WTC11 (cell line): ENCODE measurements at regions of chr5 and their contacts with region 1.

Region 1: GRCh38 chr5:91928754-91929521 is 545.8 kb upstream of the ARRDC3 start:
- DNase-seq: no peak
- ATAC-seq: peak; percentile 73
- H3K4me3 Mint-ChIP-seq: no peak overlapping the region
- H3K27ac Mint-ChIP-seq: no peak overlapping the region
- H3K4me1 Mint-ChIP-seq: peaks cover 15% of the 10 kb centered on the region
- H3K27me3 Mint-ChIP-seq: no peaks in the 10 kb centered on the region
- CTCF ChIP-seq: no peak; the same call in 1 of the 2 replicates

Region 2: GRCh38 chr5:91641730-91642350 is 287.1 kb before region 1 on chr5:
- CTCF ChIA-PET with region 1: interaction called, 18 read pairs
- POLR2A ChIA-PET with region 1: no interaction called
- DNase-seq: no peak
- ATAC-seq: no peak
- H3K4me3 Mint-ChIP-seq: no peak overlapping the region
- H3K27ac Mint-ChIP-seq: no peak overlapping the region
- H3K4me1 Mint-ChIP-seq: peaks cover 27% of the 10 kb centered on the region
- H3K27me3 Mint-ChIP-seq: no peaks in the 10 kb centered on the region
- CTCF ChIP-seq: peak; percentile 55

Region 3: DNA sequence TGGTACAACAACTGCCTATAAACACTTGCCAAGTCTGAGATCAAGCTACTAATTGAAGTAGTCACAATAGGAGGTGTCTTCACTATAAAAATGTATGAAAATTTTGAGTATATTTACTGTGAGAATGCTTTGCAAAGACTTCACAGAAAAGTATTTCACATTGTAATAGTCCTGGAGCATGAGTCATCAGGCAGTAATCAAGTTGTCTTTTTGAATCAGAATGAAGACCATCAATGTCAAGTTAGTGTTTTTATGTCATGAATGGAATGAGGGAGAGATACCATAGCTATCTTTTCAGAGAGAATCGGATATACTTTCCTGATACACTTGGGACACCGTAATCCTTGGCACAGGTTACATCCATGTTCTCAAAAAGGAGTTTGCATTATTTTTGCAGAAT is 78.9 kb before region 1 on chr5:
- CTCF ChIA-PET with region 1: no interaction called
- POLR2A ChIA-PET with region 1: no interaction called
- DNase-seq: no peak
- ATAC-seq: no peak
- H3K4me3 Mint-ChIP-seq: no peak overlapping the region
- H3K27ac Mint-ChIP-seq: peak overlapping the region; percentile 67; the same call in 1 of the 2 replicates
- H3K4me1 Mint-ChIP-seq: peaks cover 28% of the 10 kb centered on the region
- H3K27me3 Mint-ChIP-seq: no peaks in the 10 kb centered on the region
- CTCF ChIP-seq: no peak

Region 4: DNA sequence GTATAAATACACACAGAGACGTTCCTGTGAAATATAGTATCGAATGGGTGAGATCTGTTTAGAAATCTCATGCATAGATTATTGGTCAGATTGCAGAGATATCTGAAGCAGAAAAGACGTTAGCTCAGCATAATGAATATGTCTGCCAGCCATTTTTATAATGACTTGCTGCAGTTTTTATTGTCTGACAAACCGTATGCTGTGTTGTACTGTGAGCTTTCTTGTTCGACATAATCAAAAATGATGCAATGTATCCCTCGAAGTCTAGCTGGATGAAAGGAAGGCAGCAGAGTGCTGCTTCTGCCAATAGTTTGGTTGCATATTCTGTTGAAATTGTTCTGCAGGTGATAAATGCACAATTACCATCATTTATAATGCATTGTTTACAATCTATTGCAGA is 30.9 kb before region 1 on chr5:
- CTCF ChIA-PET with region 1: no interaction called
- POLR2A ChIA-PET with region 1: no interaction called
- DNase-seq: no peak
- ATAC-seq: no peak
- H3K4me3 Mint-ChIP-seq: no peak overlapping the region
- H3K27ac Mint-ChIP-seq: no peak overlapping the region
- H3K4me1 Mint-ChIP-seq: peaks cover 6% of the 10 kb centered on the region
- H3K27me3 Mint-ChIP-seq: no peaks in the 10 kb centered on the region
- CTCF ChIP-seq: no peak

Region 5: GRCh38 chr5:91957666-91958065 is 28.7 kb after region 1 on chr5:
- CTCF ChIA-PET with region 1: no interaction called
- POLR2A ChIA-PET with region 1: no interaction called
- DNase-seq: no peak
- ATAC-seq: no peak
- H3K4me3 Mint-ChIP-seq: no peak overlapping the region
- H3K27ac Mint-ChIP-seq: no peak overlapping the region
- H3K4me1 Mint-ChIP-seq: peaks cover 7% of the 10 kb centered on the region
- H3K27me3 Mint-ChIP-seq: no peaks in the 10 kb centered on the region
- CTCF ChIP-seq: no peak

Region 6: DNA sequence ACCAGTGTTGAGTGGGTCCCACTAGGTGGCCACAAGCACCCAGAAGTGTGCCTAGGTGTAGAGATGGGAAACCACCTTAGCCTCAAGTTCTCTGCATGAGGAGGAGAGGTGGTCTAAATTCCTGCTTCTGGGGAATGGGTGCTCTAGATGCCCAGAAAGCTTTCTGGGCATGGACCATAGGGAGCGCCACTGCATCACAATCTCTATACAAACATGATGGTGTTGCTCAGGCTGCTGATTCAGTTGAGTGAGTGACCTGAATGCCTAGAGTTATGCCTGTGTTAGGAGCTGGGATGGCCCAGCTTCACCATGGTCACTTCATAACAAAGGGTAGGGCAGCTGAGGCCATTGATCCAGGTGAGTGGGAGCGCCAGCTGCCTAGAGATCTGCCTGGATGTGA is 122.0 kb after region 1 on chr5:
- CTCF ChIA-PET with region 1: no interaction called
- POLR2A ChIA-PET with region 1: no interaction called
- DNase-seq: no peak
- ATAC-seq: peak; percentile 61; the same call in 1 of the 2 replicates
- H3K4me3 Mint-ChIP-seq: no peak overlapping the region
- H3K27ac Mint-ChIP-seq: no peak overlapping the region
- H3K4me1 Mint-ChIP-seq: 0 out of 2 replicates have a peak, but pooled peaks cover 2% of the 10 kb centered on the region
- H3K27me3 Mint-ChIP-seq: no peaks in the 10 kb centered on the region
- CTCF ChIP-seq: no peak